Esophagus muscularis mucosa (tissue), 4 donors: ENCODE measurements at regions of chr9 and their contacts with region 1.

Region 1: GRCh38 chr9:15510789-15511575 is at the start of gene PSIP1:
- DNase-seq: peak; percentile 94
- H3K4me3 ChIP-seq: peak within 1 kb of the TSS; percentile 87 to 99 (median 96)
- H3K27ac ChIP-seq: peak within 1 kb of the TSS; percentile 85 to 96 (median 94)
- H3K4me1 ChIP-seq: peaks cover 13 to 28% (median 27%) of the 10 kb centered on the region in 4 donors
- H3K27me3 ChIP-seq: no peaks in the 10 kb centered on the region
- CTCF ChIP-seq: peak in 1 of 3 experiments; percentile 21
- EP300 ChIP-seq: no peak
- POLR2A ChIP-seq: no peak
- total RNA-seq, gene PSIP1: 33.3 to 56.9 (median 45.5) TPM

Region 2: GRCh38 chr9:15262581-15262980 is 248.4 kb before region 1 on chr9:
- intact Hi-C with region 1: no loop called
- DNase-seq: no peak
- H3K4me3 ChIP-seq: no peak overlapping the region
- H3K27ac ChIP-seq: no peak overlapping the region
- H3K4me1 ChIP-seq: peaks cover 0 to 14% (median 8%) of the 10 kb centered on the region in 4 donors
- H3K27me3 ChIP-seq: no peaks in the 10 kb centered on the region
- CTCF ChIP-seq: no peak
- EP300 ChIP-seq: no peak
- POLR2A ChIP-seq: no peak

Region 3: DNA sequence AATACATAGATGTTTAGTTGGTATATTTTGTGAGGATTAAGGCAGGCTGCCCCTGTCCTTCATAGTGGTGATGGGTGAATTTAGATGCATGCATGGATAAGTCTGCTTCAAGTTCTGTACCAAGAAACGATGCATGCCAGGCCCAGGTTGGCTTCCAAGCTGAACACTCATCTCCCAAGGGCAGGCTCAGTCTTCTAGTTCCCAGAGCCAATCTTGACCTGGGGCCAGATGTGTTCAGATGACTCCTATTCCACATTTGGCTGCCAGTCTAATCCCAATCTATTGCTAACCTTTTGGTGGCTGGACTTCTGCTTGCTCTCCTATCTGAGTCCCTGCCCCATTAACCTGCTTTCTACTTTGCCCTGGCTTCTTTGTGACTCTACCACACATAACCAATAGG is 106.8 kb before region 1 on chr9:
- intact Hi-C with region 1: no loop called
- DNase-seq: no peak
- H3K4me3 ChIP-seq: no peak overlapping the region
- H3K27ac ChIP-seq: no peak overlapping the region
- H3K4me1 ChIP-seq: no peaks in the 10 kb centered on the region
- H3K27me3 ChIP-seq: no peaks in the 10 kb centered on the region
- CTCF ChIP-seq: no peak
- EP300 ChIP-seq: no peak
- POLR2A ChIP-seq: no peak

Region 4: GRCh38 chr9:15552636-15553527 is 41.9 kb after region 1 on chr9 and contains the start of gene CCDC171:
- intact Hi-C with region 1: loop called (anchors 2 kb)
- DNase-seq: peak; percentile 97
- H3K4me3 ChIP-seq: peak within 1 kb of the TSS; percentile 69 to 86 (median 76)
- H3K27ac ChIP-seq: peak within 1 kb of the TSS; percentile 80 to 94 (median 89)
- H3K4me1 ChIP-seq: peaks cover 7 to 14% (median 11%) of the 10 kb centered on the region in 4 donors
- H3K27me3 ChIP-seq: no peaks in the 10 kb centered on the region
- CTCF ChIP-seq: no peak
- EP300 ChIP-seq: no peak
- POLR2A ChIP-seq: peak; percentile 12
- total RNA-seq, gene CCDC171: 1.3 to 1.7 (median 1.4) TPM

Region 5: GRCh38 chr9:15813076-15813475 is 302.1 kb after region 1 on chr9:
- intact Hi-C with region 1: no loop called
- DNase-seq: no peak
- H3K4me3 ChIP-seq: no peak overlapping the region
- H3K27ac ChIP-seq: no peak overlapping the region
- H3K4me1 ChIP-seq: no peaks in the 10 kb centered on the region
- H3K27me3 ChIP-seq: no peaks in the 10 kb centered on the region
- CTCF ChIP-seq: no peak
- EP300 ChIP-seq: no peak
- POLR2A ChIP-seq: no peak